Heart right ventricle (tissue), 16 donors: ENCODE measurements at regions of chr7 and their contacts with region 1.

Region 1: DNA sequence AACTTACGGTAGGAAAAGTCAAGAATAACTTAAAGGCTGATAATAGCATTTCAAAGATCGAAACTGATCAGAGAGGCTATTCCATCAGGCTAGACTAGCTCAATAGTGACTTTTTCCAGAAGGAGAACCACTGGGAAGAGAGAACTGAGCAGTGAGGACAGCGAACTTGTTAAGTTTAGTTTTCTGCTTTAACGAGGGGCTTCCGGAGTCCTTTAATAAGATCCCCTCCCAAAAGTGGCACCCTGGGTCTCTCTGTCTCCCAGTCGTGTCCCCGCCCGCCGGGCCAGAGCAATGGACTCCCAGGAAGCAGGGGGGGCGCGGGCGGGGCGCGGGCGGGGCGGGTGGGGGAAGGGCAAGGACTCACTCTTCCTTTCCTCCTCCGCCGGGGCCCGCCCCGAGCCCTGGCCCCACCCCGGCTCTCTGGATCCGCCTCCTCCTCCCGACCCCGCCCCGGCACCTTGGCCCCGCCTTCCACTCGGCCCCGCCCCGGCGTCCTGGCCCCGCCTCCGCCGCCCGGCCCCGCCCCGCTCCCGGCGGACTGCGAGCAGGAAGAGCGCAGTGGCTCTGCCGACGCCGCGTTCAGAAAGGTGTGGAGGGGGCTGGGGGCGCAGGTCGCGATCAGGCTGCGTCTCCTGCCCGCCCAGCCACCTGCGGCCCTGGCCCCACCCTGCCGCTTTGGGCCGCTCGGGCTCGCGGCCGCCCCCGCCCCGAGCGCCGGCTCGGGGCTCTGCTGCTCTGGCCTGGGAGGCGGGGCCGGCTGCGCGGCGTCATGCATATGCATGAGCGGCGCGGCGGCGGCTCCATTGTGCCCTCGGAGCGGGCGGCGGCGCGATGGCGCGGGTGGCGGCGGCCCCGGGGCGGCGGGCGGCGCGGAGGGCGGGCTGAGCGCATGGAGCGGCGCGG is at the start of gene ZMIZ2:
- DNase-seq: peak; percentile 91 to 95
- ATAC-seq: peak; percentile 98 to 99 (median 98)
- H3K4me3 ChIP-seq: peak within 1 kb of the TSS; percentile 63 to 93 (median 90)
- H3K27ac ChIP-seq: peak within 1 kb of the TSS; percentile 91 to 99 (median 98)
- H3K4me1 ChIP-seq: peaks cover 9 to 53% (median 31%) of the 10 kb centered on the region in 9 donors
- H3K27me3 ChIP-seq: no peaks in the 10 kb centered on the region
- CTCF ChIP-seq: no peak
- total RNA-seq, gene ZMIZ2: 38.9 to 80.4 (median 47.9) TPM

Region 2: GRCh38 chr7:44559485-44559884 is 188.8 kb before region 1 on chr7:
- intact Hi-C with region 1: no loop called
- DNase-seq: no peak
- ATAC-seq: no peak
- H3K4me3 ChIP-seq: no peak overlapping the region
- H3K27ac ChIP-seq: no peak overlapping the region
- H3K4me1 ChIP-seq: no peaks in the 10 kb centered on the region
- H3K27me3 ChIP-seq: no peaks in the 10 kb centered on the region
- CTCF ChIP-seq: no peak

Region 3: GRCh38 chr7:44581879-44582603 is 166.3 kb before region 1 on chr7 and contains the start of gene TMED4:
- intact Hi-C with region 1: loop called in 2 of 10 experiments (anchors 5 to 10 kb)
- DNase-seq: peak; percentile 99 to 100
- ATAC-seq: peak; percentile 98 to 99 (median 98)
- H3K4me3 ChIP-seq: peak within 1 kb of the TSS; percentile 72 to 99 (median 89)
- H3K27ac ChIP-seq: peak within 1 kb of the TSS; percentile 86 to 99 (median 96)
- H3K4me1 ChIP-seq: peaks cover 5 to 34% (median 24%) of the 10 kb centered on the region in 9 donors
- H3K27me3 ChIP-seq: no peaks in the 10 kb centered on the region
- CTCF ChIP-seq: no peak
- total RNA-seq, gene TMED4: 55.4 to 81.4 (median 69.4) TPM

Region 4: DNA sequence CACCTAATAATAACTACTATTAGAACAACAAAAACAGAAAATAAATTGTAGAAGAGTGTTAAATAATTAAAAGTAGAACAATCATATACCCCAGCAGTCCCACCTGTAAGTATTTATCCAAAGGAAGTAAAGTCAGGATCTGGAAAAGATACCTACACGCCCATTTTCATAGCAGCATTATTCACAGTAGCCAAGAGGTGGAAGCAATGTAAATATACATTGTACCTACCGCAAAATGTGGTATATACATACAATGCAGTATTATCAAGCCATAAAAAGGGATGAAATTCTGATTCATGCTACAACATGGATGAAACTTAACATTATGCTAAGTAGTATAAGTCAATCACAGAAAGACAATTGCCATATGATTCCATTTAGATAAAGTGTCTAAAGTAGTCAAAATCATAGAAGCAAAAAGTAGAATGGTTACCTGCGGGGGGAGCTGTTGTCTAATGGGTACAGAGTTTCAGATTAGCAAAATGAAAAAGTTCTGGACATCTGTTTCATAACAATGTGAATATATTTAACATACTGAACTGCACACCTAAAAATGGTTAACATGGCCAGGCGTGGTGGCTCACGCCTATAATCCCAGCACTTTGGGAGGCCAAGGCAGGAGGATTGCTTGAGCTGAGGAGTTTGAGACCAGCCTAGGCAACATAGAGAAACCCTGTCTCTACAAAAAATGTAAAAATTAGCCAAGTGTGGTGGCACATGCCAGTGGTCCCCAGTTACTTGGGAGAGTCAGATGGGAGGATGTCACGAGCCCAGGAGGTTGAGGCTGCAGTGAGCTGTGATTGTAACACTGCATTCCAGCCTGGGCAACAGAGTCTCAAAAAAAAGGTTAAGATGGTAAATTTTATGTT is 160.2 kb before region 1 on chr7:
- intact Hi-C with region 1: loop called in 2 of 10 experiments (anchors 5 to 10 kb)
- DNase-seq: peak in 1 of 2 donors; percentile 55
- ATAC-seq: peak; percentile 16 to 74 (median 70)
- H3K4me3 ChIP-seq: no peak overlapping the region
- H3K27ac ChIP-seq: no peak overlapping the region
- H3K4me1 ChIP-seq: peaks cover 0 to 7% (median 4%) of the 10 kb centered on the region in 9 donors
- H3K27me3 ChIP-seq: no peaks in the 10 kb centered on the region
- CTCF ChIP-seq: peak; percentile 30 to 81 (median 72)

Region 5: GRCh38 chr7:44595934-44596635 is 152.2 kb before region 1 on chr7:
- intact Hi-C with region 1: loop called in 1 of 10 experiments (anchors 5 kb)
- DNase-seq: peak in 1 of 2 donors; percentile 14
- ATAC-seq: peak; percentile 71 to 97 (median 88)
- H3K4me3 ChIP-seq: no peak overlapping the region
- H3K27ac ChIP-seq: peak overlapping the region; percentile 23 to 77 (median 72)
- H3K4me1 ChIP-seq: peaks cover 0 to 13% (median 8%) of the 10 kb centered on the region in 9 donors
- H3K27me3 ChIP-seq: no peaks in the 10 kb centered on the region
- CTCF ChIP-seq: peak in 2 of 9 donors; percentile 11 to 12

Region 6: GRCh38 chr7:44791278-44792219 is 43.3 kb after region 1 on chr7:
- intact Hi-C with region 1: loop called in 5 of 10 experiments (anchors 1 to 5 kb)
- DNase-seq: no peak
- ATAC-seq: no peak
- H3K4me3 ChIP-seq: no peak overlapping the region
- H3K27ac ChIP-seq: no peak overlapping the region
- H3K4me1 ChIP-seq: peaks cover 0 to 10% (median 7%) of the 10 kb centered on the region in 9 donors
- H3K27me3 ChIP-seq: no peaks in the 10 kb centered on the region
- CTCF ChIP-seq: no peak

Region 7: DNA sequence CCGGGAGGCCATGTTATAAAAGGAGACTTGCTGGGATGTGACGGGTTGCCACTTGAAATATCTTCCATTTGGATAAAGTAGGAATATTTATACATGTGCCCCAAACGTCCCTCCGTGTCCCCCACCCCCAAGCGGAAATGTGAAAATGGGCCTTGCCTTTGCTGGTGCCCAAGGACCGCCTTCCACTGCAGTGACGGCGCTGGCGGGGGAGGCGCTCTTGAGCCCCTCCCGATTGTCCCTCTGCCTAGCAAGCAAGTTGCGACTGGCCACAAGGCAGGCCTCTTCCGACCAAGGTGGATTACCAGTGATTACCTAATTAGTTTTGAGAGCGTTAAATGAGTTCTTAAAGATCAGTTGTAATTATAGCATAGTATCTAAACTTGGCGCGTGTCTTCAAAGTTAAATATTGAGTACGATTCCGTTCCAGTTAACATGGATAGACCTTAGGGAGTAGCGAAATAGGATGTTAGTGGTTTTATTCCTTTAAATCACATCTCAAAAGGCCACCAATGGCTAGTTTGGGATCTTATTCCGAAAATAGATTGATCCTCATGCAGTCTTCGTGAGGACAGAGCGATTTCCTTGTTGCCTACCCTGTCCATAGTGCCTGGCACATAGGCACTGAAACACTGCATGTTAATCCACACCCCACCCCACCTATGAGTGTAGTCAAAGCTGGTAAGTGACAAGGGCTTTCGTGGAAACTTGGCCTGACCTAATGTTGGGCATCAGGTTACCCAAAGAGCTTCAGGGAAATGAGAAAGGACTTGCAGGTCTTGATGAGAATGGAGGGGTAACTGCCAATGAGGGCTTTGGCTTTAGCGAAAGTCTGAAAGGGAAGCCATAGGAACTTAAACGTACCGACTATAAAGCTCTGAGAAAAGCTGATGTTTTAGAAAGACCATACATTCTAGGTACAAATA is 49.3 kb after region 1 on chr7:
- intact Hi-C with region 1: loop called in 5 of 10 experiments (anchors 1 to 5 kb)
- DNase-seq: peak; percentile 86 to 93
- ATAC-seq: peak; percentile 77 to 92 (median 87)
- H3K4me3 ChIP-seq: peak overlapping the region; percentile 50 to 86 (median 82)
- H3K27ac ChIP-seq: peak overlapping the region; percentile 97 to 100 (median 100)
- H3K4me1 ChIP-seq: peaks cover 0 to 38% (median 27%) of the 10 kb centered on the region in 9 donors
- H3K27me3 ChIP-seq: no peaks in the 10 kb centered on the region
- CTCF ChIP-seq: peak in 8 of 9 donors; percentile 22 to 65 (median 54)

Region 8: GRCh38 chr7:44914992-44915607 is 166.8 kb after region 1 on chr7:
- intact Hi-C with region 1: no loop called
- DNase-seq: no peak
- ATAC-seq: no peak
- H3K4me3 ChIP-seq: no peak overlapping the region
- H3K27ac ChIP-seq: no peak overlapping the region
- H3K4me1 ChIP-seq: no peaks in the 10 kb centered on the region
- H3K27me3 ChIP-seq: no peaks in the 10 kb centered on the region
- CTCF ChIP-seq: no peak